Activated naive CD4-positive, alpha-beta T cell treated with anti-CD3 and anti-CD28 coated beads, Interleukin-2, amount 10 ng/mL, durations not matched to agents 7 days and 5 days (primary cell): ENCODE measurements at regions of chr11 and their contacts with region 1.

Region 1: GRCh38 chr11:74941308-74941891 is 7.5 kb downstream of the XRRA1 start:
- DNase-seq: no peak
- H3K4me3 Mint-ChIP-seq: no peak overlapping the region
- H3K27ac Mint-ChIP-seq: no peak overlapping the region
- H3K4me1 Mint-ChIP-seq: no peaks in the 10 kb centered on the region
- H3K27me3 Mint-ChIP-seq: no peaks in the 10 kb centered on the region

Region 2: DNA sequence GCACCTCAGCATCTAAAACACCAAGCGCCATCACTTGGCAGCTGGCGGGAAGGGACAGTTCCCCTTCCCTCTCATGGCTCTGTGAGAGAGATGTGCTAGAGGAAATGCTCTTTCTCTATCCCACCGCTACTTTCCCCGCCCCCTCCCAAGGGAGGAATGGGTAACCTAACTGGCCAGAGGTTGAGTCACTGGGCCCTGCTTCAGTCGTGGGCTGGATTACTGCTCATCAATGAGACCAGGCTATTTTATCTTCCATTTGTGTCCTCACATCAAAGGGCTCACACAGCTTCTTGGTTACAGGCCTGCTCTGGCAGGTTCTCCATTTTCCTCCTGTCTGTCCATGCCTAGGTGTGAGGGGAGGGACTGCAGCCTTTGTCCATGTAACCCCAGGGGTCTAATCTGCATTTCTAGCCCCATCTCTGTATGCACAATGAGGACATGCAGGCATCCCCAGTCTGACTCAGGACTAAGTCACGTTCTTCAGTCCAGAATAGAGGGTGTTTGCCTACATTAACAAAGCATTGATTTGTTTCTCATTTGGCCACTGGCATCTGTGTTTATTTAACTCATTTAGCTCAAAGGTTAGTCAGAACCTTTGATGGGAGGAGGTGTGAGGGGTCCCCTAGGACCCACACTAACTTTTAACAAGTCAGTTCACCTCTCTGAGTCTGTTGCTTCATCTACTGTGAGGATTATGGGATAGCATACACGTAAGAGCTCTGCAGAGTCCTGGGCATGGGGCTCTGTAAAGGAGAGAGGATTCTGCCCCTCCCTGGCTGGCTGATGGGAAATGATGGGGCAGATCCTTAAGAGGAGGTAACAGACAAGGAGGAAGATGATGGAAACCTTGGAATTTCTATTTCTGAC is 91.6 kb before region 1 on chr11:
- CTCF ChIA-PET with region 1: no interaction called
- DNase-seq: no peak
- H3K4me3 Mint-ChIP-seq: no peak overlapping the region
- H3K27ac Mint-ChIP-seq: no peak overlapping the region
- H3K4me1 Mint-ChIP-seq: peaks cover 8% of the 10 kb centered on the region
- H3K27me3 Mint-ChIP-seq: no peaks in the 10 kb centered on the region

Region 3: DNA sequence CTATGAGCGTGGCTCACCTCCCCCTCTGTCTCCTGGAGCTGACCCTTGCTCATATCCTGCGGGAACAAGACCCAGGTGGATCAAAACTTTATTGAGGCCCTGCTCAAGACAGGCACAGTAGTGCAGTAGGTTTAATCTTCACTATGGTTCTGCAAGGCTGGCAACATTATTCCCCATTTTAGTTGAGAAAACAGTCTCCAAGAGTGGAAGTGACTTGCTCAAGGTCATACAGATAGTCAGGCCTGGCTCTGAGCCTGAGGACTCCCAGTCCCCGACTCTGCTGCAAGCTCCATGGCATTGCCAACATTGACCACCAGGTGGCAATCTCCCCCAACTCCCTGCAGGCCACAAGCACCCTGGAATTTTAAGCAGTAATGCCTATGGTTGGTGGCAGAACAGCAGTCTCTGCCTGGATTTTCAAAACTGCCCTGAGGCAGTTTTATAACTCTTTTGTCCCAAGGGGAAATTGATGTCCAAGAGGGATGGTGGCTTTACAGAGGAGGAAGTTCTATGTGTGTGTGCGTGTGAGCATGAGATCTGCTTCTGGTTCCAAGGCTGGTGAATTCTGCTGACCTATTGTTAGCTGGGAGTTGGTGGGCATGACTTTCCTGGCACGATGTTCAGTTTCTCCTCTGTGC is 81.5 kb after region 1 on chr11:
- CTCF ChIA-PET with region 1: interaction called, 12 read pairs
- DNase-seq: peak; percentile 85
- H3K4me3 Mint-ChIP-seq: no peak overlapping the region
- H3K27ac Mint-ChIP-seq: no peak overlapping the region
- H3K4me1 Mint-ChIP-seq: no peaks in the 10 kb centered on the region
- H3K27me3 Mint-ChIP-seq: no peaks in the 10 kb centered on the region